Activated T-helper 2 cell treated with anti-CD3 and anti-CD28 coated beads, Interferon-gamma antibody, Interleukin-2, Interleukin-4, amounts not matched to agents 10 μg/mL and 5 μg/mL and 100 μg/mL, durations not matched to agents 14 hours and 24 hours and 36 hours (primary cell): ENCODE measurements at regions of chrX and their contacts with region 1.

Region 1: GRCh38 chrX:137051978-137052642 is 18.3 kb upstream of the GPR101 start:
- DNase-seq: peak; percentile 70
- H3K4me3 Mint-ChIP-seq: peak overlapping the region; percentile 87
- H3K27ac Mint-ChIP-seq: peak overlapping the region; percentile 65
- H3K4me1 Mint-ChIP-seq: peaks cover 3% of the 10 kb centered on the region
- H3K27me3 Mint-ChIP-seq: peaks cover 39% of the 10 kb centered on the region

Region 2: GRCh38 chrX:136616987-136617685 is 435.0 kb before region 1 on chrX:
- intact Hi-C with region 1: no loop called
- DNase-seq: peak; percentile 27
- H3K4me3 Mint-ChIP-seq: no peak overlapping the region
- H3K27ac Mint-ChIP-seq: peak overlapping the region; percentile 83
- H3K4me1 Mint-ChIP-seq: peaks cover 51% of the 10 kb centered on the region
- H3K27me3 Mint-ChIP-seq: no peaks in the 10 kb centered on the region

Region 3: GRCh38 chrX:136635235-136635634 is 416.9 kb before region 1 on chrX:
- intact Hi-C with region 1: no loop called
- DNase-seq: no peak
- H3K4me3 Mint-ChIP-seq: peak overlapping the region; percentile 55
- H3K27ac Mint-ChIP-seq: peak overlapping the region; percentile 80
- H3K4me1 Mint-ChIP-seq: peaks cover 71% of the 10 kb centered on the region
- H3K27me3 Mint-ChIP-seq: no peaks in the 10 kb centered on the region

Region 4: DNA sequence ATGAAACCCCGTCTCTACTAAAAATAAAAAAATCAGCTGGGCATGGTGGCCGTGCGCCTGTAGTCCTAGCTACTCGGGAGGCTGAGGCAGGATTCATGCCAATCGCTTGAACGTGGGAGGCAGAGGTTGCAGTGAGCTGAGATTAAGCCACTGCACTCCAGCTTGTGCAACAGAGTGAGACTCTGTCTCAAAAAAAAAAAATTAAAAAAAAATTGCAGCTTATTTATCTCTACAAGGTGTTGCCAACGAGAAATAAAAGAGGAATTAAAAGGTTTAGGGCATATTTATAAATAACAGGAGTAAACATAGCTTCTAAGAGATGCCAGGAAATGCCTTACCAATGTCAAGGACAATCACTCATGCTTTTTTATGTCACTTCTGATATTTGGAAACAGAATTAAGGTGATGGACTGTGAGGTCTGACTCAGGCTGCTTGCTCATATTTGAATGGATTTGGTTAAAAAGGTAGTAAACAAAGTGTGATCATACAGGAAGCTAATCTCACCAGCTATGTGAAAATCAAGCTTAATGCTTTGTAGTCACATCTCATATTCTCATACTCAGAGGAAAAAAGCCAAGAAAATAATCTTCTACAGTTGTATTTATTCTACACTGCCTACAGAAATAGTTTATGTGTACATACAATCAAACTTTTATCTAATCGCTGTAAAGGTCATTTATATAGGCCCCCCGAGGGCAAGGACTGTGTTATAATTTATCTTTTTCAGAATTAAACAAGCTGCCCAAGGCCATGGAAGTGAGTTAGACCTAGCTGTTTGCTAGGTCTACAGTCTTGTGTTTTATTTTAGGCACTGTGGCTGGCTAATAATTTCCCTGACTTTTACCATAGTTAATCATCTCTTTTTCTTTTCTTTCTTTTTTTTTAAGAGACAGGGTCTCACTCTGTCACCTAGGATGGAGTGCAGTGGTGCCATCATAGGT is 110.4 kb before region 1 on chrX:
- intact Hi-C with region 1: no loop called
- DNase-seq: no peak
- H3K4me3 Mint-ChIP-seq: no peak overlapping the region
- H3K27ac Mint-ChIP-seq: no peak overlapping the region
- H3K4me1 Mint-ChIP-seq: peaks cover 2% of the 10 kb centered on the region
- H3K27me3 Mint-ChIP-seq: no peaks in the 10 kb centered on the region

Region 5: GRCh38 chrX:136953867-136954787 is 98.0 kb before region 1 on chrX:
- intact Hi-C with region 1: loop called (anchors 1 kb)
- DNase-seq: peak; percentile 25
- H3K4me3 Mint-ChIP-seq: no peak overlapping the region
- H3K27ac Mint-ChIP-seq: no peak overlapping the region
- H3K4me1 Mint-ChIP-seq: peaks cover 2% of the 10 kb centered on the region
- H3K27me3 Mint-ChIP-seq: no peaks in the 10 kb centered on the region

Region 6: GRCh38 chrX:137031517-137032340 is 20.4 kb before region 1 on chrX:
- intact Hi-C with region 1: loop called (anchors 2 kb)
- DNase-seq: peak; percentile 48
- H3K4me3 Mint-ChIP-seq: no peak overlapping the region
- H3K27ac Mint-ChIP-seq: no peak overlapping the region
- H3K4me1 Mint-ChIP-seq: peaks cover 5% of the 10 kb centered on the region
- H3K27me3 Mint-ChIP-seq: peaks cover 61% of the 10 kb centered on the region